RWPE1 (cell line): ENCODE measurements at regions of chr12 and their contacts with region 1.

Region 1: DNA sequence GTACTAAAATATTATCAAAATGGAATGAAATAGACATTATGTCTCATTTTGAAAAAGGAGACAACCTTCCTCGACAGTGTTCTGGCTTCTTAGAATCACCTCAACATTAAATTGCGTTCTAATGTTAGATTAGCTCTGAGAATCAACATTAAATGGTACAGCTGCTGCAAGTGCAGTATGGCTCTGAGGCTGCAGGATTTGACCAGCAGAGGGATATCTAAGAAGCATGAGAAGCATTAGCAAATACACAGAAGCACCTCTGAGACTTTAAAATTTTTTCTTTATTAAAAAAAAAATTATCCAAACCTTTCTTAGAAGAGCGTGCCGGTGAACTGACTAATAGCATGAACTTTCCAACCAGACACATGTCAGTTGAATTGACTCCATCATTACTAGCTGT is 253.4 kb upstream of the LRIG3 start:
- DNase-seq: no peak
- H3K27ac ChIP-seq: no peak overlapping the region
- CTCF ChIP-seq: no peak

Region 2: GRCh38 chr12:59040656-59041055 is 133.0 kb before region 1 on chr12:
- CTCF ChIA-PET with region 1: interaction called, 10 read pairs
- POLR2A ChIA-PET with region 1: no interaction called
- DNase-seq: peak; percentile 26
- H3K27ac ChIP-seq: peak overlapping the region; percentile 79
- CTCF ChIP-seq: no peak